A549 (cell line): ENCODE measurements at regions of chr6 and their contacts with region 1.

Region 1: DNA sequence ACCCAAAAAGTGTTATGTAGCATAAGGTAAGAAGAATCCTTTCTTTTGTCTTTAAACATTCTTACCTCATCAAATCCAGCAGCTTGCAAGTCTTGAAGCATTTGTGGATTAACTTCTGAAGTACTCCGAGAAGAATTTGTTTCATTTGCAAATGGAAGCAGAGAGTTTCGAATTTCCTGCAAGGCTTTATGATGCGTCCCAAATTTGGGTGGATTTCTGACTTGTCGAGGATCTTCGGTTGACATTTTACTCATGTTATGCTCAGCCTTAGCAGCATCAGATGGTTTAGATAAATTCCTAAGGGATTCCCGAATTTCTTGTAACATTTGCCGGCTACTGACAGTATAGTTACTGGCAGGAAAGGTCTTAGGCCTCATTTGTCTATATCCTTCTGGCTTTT is 16.2 kb downstream of the LATS1 start:
- DNase-seq: no peak
- ATAC-seq: no peak
- H3K4me3 ChIP-seq: no peak overlapping the region
- H3K27ac ChIP-seq: no peak overlapping the region
- H3K4me1 ChIP-seq: no peaks in the 10 kb centered on the region
- CTCF ChIP-seq: no peak
- EP300 ChIP-seq: no peak
- POLR2A ChIP-seq: no peak
- RAD21 ChIP-seq: no peak

Region 2: DNA sequence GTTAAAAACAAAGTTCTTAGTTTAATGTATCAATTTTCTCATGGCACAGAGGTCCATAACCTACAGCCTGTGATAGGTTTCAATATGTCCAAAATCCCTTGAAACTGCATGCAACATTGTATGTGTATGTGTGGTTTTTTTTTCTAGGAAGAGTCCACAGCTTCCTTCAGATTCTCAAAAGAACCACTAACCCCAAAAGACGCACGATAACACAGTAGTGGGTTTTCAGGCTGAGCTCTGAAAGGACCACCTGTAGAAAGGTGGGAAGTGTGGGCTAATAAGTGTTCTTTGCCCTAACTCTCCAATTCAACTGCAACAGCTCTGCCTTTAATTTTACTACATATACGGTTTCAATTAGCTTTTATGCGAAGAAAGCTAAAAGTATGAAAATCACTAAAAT is 41.7 kb before region 1 on chr6:
- CTCF ChIA-PET with region 1: no interaction called
- POLR2A ChIA-PET with region 1: interaction called, 11 read pairs
- DNase-seq: no peak
- ATAC-seq: no peak
- H3K4me3 ChIP-seq: no peak overlapping the region
- H3K27ac ChIP-seq: no peak overlapping the region
- H3K4me1 ChIP-seq: no peaks in the 10 kb centered on the region
- CTCF ChIP-seq: no peak
- EP300 ChIP-seq: no peak
- POLR2A ChIP-seq: no peak
- RAD21 ChIP-seq: no peak